Ovary (tissue), 10 donors: ENCODE measurements at regions of chr2 and their contacts with region 1.

Region 1: DNA sequence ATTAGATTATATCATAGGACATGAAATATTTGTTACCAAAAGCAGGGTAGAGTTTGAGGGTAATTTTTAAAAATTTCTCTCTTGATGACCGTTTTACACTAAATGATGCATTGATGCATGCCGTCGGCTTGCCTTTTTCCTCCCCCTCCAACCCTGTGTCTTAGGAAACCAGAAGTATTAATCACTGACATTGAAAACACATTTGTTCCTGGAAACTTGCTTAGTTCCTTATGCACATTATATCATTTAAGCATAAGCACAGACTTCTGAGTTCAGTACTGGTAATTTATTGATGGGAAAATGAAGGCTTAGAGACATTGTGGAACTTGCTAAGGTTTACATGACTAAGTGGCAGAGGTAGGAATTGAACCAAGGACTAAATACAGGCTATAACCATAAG is 206.3 kb upstream of the SPHKAP start:
- DNase-seq: no peak
- H3K4me3 ChIP-seq: no peak overlapping the region
- H3K27ac ChIP-seq: no peak overlapping the region
- H3K4me1 ChIP-seq: no peaks in the 10 kb centered on the region
- H3K27me3 ChIP-seq: no peaks in the 10 kb centered on the region
- CTCF ChIP-seq: no peak
- EP300 ChIP-seq: no peak
- POLR2A ChIP-seq: no peak

Region 2: DNA sequence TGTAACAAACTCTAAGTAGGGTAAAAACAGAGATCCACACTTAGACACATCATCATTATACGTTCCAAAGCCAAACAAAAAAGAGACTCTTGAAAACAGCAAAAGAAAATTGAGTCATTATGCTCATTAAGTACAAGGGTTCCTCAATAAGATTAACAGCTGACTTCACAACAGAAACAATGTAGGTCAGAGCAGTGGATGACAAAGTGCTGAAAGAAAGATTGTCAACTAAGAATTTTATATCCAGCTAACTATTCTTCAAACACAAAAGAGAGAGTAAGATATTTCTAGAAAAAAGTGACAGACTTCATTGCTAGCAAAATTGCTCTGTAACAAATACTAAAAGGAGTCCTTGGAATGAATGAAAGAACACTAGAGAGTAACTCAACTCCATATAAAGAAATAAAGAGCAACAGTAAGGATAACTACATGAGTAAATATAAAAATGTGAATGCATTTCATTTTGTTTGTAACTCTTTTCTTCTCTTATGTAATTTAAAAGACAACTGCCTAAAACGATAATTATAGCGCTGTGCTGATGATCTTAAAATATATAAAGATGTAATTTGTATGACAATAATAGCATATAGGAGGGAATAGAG is 1350.3 kb after region 1 on chr2:
- intact Hi-C with region 1: loop called in 1 of 4 experiments (anchors 5 kb)
- DNase-seq: no peak
- H3K4me3 ChIP-seq: no peak overlapping the region
- H3K27ac ChIP-seq: no peak overlapping the region
- H3K4me1 ChIP-seq: no peaks in the 10 kb centered on the region
- H3K27me3 ChIP-seq: no peaks in the 10 kb centered on the region
- CTCF ChIP-seq: no peak
- EP300 ChIP-seq: no peak
- POLR2A ChIP-seq: no peak